ENCODE measurements at regions of chr10 and their contacts with region 1.

Region 1: DNA sequence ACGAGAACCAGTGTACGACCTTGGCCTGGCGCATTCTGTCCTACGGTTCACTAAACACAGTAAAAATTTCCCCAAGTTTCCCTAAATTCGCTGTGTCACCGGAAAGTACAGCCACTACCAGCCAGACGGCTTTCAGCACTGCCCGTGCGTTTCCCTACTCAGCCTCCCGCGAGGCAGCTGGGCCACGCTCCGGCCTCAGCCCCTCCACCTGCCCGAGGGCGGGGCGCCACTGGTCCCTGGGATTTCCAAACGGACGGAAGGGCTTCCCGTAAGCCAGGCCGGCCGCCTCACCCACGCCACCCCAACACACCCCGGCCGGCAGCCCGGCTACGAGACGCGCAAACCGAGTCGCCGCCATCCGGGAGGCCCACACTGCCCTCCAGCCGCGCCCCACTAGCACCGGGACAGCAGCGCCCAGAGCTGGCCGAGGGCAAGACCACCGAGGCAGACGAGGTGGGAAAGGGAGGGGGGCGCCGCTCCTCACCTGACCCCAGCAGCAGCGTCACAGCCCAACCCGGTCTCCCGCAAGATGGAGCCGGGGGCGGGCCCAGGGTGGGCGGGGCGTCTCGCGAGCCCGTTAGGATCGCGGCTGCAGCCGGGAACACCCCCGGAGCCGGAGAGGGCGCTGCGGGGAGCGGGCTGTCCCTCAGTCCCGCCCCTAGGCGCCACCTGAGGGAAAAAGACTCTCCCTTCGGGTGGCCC is at the start of gene ANXA7:
- DNase-seq: peak; percentile 62 to 95
- H3K4me3 ChIP-seq: peak within 1 kb of the TSS; percentile 88 to 99 (median 92)
- H3K27ac ChIP-seq: peak within 1 kb of the TSS; percentile 91
- H3K4me1 ChIP-seq: peaks cover 2 to 8% (median 4%) of the 10 kb centered on the region in 4 experiments; a peak in 5 of 7 replicates
- H3K27me3 ChIP-seq: no peaks in the 10 kb centered on the region
- CTCF ChIP-seq: peak in 1 of 3 experiments; percentile 1; a peak in 1 of 4 replicates
- EP300 ChIP-seq: no peak
- POLR2A ChIP-seq: peak; percentile 79 to 80
- RAD21 ChIP-seq: no peak
- total RNA-seq, gene ANXA7: 59.9 and 63.6 TPM in 2 replicates

Region 2: GRCh38 chr10:73424516-73424915 is 10.8 kb after region 1 on chr10:
- CTCF ChIA-PET with region 1: interaction called, 3 read pairs
- POLR2A ChIA-PET with region 1: interaction called, 17 read pairs
- DNase-seq: no peak
- H3K4me3 ChIP-seq: no peak overlapping the region
- H3K27ac ChIP-seq: no peak overlapping the region
- H3K4me1 ChIP-seq: no peaks in the 10 kb centered on the region
- H3K27me3 ChIP-seq: no peaks in the 10 kb centered on the region
- CTCF ChIP-seq: no peak
- EP300 ChIP-seq: no peak
- POLR2A ChIP-seq: no peak
- RAD21 ChIP-seq: no peak